ENCODE measurements at regions of chr3 and their contacts with region 1.

Region 1: DNA sequence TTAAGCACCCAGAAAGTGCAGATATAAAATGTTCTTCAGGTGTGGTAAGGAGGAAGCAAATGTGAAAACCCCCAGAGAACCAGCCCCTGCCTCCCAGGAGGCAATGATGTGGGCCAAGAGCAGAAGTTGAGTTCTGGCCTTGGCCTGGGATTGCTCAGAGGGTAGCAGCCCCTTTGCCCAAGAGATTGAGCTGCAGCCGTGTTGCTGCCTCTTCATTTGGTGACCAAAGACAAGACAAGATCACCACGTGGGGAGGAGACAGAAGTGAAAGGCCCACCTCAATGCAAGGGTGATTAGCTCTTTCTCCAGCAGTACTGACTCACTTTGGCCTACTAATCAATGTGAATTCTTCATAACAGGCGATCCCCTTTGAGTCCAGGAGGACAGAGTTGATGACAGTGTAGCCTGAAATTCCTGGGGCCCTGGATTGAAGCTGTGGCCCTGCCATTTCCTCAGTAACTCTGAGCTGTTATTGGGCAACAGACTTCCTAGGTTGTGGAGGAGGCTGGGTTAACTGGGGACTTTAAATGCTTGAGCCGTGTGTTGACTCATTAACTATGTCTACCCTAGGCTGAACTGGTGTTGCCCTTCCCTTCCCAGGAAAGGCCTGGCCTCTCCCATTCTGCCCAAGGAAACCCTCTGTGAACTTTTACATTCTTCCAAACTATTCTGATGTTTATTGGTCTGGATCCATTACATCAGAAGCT is 86.5 kb downstream of the ST6GAL1 start:
- DNase-seq: peak; percentile 52
- ATAC-seq: peak; percentile 66
- H3K4me3 Mint-ChIP-seq: peak overlapping the region; percentile 73
- H3K27ac Mint-ChIP-seq: peak overlapping the region; percentile 87
- H3K4me1 Mint-ChIP-seq: peaks cover 100% of the 10 kb centered on the region
- H3K27me3 Mint-ChIP-seq: no peaks in the 10 kb centered on the region
- CTCF ChIP-seq: no peak

Region 2: DNA sequence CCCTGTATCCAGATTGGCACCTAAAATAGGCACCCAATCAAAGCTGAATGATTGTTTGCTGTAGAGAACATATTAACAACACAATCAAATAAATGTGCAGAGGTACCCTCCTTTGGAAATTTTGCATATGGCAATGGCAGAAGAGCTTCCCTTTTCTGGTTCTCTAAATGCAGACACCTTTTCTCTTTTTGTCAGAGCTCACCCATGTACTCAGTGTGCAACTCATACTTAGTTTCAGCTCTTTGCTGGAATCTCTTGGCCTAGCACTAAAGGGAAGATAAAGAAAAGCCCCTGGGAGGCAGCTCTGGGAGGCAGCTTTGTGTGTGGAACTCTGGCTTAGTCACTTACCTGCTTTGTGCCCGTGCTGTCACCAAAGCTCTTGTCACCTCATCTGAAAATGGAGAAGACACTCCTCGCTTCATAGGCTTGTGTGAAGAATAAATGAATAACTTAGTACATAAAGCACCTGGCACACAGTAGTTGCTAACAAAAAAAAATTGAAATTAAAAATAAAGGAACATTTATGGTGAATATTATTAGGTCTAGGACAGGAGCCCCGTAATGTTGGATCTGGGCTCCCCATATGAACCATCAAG is 57.7 kb before region 1 on chr3:
- CTCF ChIA-PET with region 1: no interaction called
- POLR2A ChIA-PET with region 1: interaction called, 6 read pairs
- intact Hi-C with region 1: loop called (anchors 2 kb)
- DNase-seq: no peak
- ATAC-seq: peak; percentile 75
- H3K4me3 Mint-ChIP-seq: peak overlapping the region; percentile 45
- H3K27ac Mint-ChIP-seq: peak overlapping the region; percentile 75
- H3K4me1 Mint-ChIP-seq: peaks cover 82% of the 10 kb centered on the region
- H3K27me3 Mint-ChIP-seq: no peaks in the 10 kb centered on the region
- CTCF ChIP-seq: no peak

Region 3: DNA sequence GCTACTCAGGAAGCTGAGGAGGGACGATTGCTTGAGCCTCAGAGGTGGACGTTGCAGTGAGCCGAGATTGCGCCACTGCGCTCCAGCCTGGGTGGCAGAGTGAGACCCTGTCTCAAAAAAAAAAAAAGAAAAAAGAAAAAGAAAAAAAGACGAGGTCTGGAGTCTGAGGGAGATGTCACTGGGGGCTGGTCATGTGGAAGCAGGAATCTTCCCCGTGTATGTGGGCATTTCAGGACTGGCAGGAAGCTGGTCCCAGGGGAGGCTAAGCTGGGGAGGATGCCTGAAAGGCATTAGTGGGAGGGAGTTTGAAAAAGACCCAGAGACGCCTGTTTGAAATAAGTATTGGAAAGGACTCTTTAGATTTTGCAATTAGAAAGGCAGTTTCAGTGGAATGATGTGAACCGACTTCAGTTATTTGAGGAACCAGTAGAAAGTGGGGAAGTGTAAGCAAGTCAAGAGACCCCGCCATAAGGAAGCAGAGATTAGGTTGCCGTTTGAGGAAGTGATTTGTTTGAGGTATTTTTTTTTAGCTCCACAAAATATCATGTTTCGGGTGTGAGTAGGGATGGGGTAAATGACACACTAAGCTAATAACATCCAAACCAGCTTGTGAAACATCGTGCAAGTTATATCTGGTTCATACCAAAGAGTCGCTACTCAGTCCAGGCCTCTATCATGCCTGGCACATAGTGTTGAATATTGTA is 31.0 kb before region 1 on chr3:
- CTCF ChIA-PET with region 1: interaction called, 4 read pairs
- POLR2A ChIA-PET with region 1: interaction called, 23 read pairs
- intact Hi-C with region 1: loop called (anchors 1 kb)
- DNase-seq: no peak
- ATAC-seq: peak; percentile 82
- H3K4me3 Mint-ChIP-seq: peak overlapping the region; percentile 39
- H3K27ac Mint-ChIP-seq: peak overlapping the region; percentile 97
- H3K4me1 Mint-ChIP-seq: peaks cover 91% of the 10 kb centered on the region
- H3K27me3 Mint-ChIP-seq: no peaks in the 10 kb centered on the region
- CTCF ChIP-seq: no peak

Region 4: DNA sequence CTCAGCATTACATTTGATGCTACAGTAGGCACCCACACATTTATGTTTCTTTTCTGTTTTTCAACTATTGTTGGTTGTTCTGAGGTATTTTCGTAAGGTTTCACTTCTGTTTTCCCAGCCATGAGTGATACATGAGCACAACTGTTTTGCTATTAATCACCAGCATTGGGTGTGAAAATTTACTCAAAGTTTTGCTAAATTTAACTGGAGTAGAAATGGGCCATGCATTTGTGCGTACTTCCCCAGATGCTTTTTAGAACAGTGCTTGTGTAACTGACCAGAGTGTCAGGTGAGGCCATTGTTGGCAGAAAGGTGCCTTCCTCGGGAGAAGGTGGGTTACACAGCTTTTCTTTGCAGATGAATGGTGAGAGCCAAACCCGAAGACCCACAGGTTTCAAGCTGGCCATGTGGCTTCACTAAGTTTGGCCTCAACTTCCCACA is 16.1 kb before region 1 on chr3:
- CTCF ChIA-PET with region 1: interaction called, 5 read pairs
- POLR2A ChIA-PET with region 1: interaction called, 44 read pairs
- intact Hi-C with region 1: loop called (anchors 1 kb)
- DNase-seq: peak; percentile 43
- ATAC-seq: peak; percentile 66
- H3K4me3 Mint-ChIP-seq: peak overlapping the region; percentile 72
- H3K27ac Mint-ChIP-seq: peak overlapping the region; percentile 89
- H3K4me1 Mint-ChIP-seq: peaks cover 94% of the 10 kb centered on the region
- H3K27me3 Mint-ChIP-seq: no peaks in the 10 kb centered on the region
- CTCF ChIP-seq: no peak

Region 5: DNA sequence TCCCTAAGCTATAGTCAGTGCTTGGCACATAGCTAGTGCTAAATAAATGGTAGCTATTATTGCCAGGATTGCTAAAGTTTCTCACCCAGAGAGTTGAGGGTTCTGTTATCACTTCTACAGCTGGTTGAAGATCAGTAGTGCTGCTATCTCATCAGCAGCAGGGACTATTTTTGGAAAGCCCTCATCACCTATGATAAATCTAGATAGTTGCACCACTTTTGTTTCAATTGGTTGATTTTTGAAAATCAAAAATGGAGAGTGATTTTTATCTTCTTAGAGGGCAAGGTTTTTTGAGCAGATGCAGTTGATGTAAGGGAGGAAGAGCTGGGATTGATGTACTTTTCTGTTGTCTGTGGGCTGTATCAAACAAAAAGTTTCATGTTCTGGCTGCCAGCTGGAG is 15.1 kb after region 1 on chr3:
- CTCF ChIA-PET with region 1: interaction called, 8 read pairs
- POLR2A ChIA-PET with region 1: interaction called, 48 read pairs
- intact Hi-C with region 1: loop called (anchors 1 kb)
- DNase-seq: no peak
- ATAC-seq: no peak
- H3K4me3 Mint-ChIP-seq: peak overlapping the region; percentile 69
- H3K27ac Mint-ChIP-seq: peak overlapping the region; percentile 86
- H3K4me1 Mint-ChIP-seq: peaks cover 90% of the 10 kb centered on the region
- H3K27me3 Mint-ChIP-seq: no peaks in the 10 kb centered on the region
- CTCF ChIP-seq: no peak

Region 6: DNA sequence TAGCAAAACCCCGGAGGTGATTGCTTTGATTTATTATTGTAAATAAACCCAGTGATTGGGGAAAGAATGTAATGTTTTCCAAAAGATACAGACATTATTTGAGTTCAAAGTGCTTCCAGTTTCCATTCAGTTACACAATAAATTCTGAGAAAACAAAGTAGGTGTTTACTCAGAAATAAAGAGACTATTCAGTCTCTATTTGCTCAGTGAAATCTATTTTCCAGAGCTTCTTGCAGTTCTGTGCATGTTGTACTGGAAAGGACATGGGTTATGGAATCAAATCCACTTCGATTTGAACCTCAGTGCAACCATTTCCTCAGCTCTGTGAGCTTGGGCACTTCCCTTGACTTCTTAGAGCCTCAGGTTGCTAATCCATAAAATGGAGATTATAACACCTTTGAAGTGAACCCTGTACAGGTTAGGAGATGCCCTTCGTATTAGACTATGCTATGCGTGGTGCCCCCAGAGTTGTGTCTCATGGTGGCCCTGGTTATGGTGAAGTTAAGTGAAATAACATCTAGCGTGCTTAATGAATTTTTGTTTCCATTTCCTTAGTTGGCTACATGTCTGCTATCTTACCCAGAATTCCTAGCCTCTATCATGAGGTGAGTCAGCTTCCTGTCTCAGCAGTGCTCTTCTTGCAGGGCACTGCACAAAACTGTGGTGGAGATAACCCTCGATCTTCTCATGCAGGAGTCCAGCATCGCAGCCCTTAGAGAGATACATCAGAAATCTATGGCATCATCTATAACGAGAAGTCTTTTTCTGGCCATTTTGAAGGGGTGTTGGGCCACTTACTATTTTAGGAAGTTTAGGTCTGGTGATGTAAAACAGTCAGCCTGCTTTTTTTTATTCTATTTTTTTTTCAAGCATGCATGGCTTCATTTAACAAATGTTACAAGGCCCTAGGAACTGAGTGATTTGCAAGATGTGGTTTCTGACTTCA is 24.8 kb after region 1 on chr3:
- CTCF ChIA-PET with region 1: interaction called, 3 read pairs
- POLR2A ChIA-PET with region 1: interaction called, 22 read pairs
- intact Hi-C with region 1: loop called (anchors 1 kb)
- DNase-seq: no peak
- ATAC-seq: peak; percentile 81
- H3K4me3 Mint-ChIP-seq: peak overlapping the region; percentile 74
- H3K27ac Mint-ChIP-seq: peak overlapping the region; percentile 97
- H3K4me1 Mint-ChIP-seq: peaks cover 83% of the 10 kb centered on the region
- H3K27me3 Mint-ChIP-seq: no peaks in the 10 kb centered on the region
- CTCF ChIP-seq: no peak

Region 7: GRCh38 chr3:187080799-187081450 is 64.1 kb after region 1 on chr3:
- CTCF ChIA-PET with region 1: no interaction called
- POLR2A ChIA-PET with region 1: no interaction called
- intact Hi-C with region 1: no loop called
- DNase-seq: no peak
- ATAC-seq: no peak
- H3K4me3 Mint-ChIP-seq: no peak overlapping the region
- H3K27ac Mint-ChIP-seq: no peak overlapping the region
- H3K4me1 Mint-ChIP-seq: peaks cover 2% of the 10 kb centered on the region
- H3K27me3 Mint-ChIP-seq: no peaks in the 10 kb centered on the region
- CTCF ChIP-seq: no peak

Measured in activated B cell treated with CpG ODN at 0.5 μM for 24 hours (primary cell).